Heart right ventricle (tissue), 16 donors: ENCODE measurements at regions of chr20 and their contacts with region 1.

Region 1: GRCh38 chr20:35883778-35884540 is 70.3 kb downstream of the SCAND1 start:
- DNase-seq: peak; percentile 59 to 70
- ATAC-seq: peak; percentile 81 to 91 (median 84)
- H3K4me3 ChIP-seq: no peak overlapping the region
- H3K27ac ChIP-seq: peak overlapping the region in 5 of 10 donors; percentile 1 to 61 (median 10)
- H3K4me1 ChIP-seq: peaks cover 0 to 32% (median 14%) of the 10 kb centered on the region in 9 donors
- H3K27me3 ChIP-seq: no peaks in the 10 kb centered on the region
- CTCF ChIP-seq: peak; percentile 42 to 82 (median 74)

Region 2: DNA sequence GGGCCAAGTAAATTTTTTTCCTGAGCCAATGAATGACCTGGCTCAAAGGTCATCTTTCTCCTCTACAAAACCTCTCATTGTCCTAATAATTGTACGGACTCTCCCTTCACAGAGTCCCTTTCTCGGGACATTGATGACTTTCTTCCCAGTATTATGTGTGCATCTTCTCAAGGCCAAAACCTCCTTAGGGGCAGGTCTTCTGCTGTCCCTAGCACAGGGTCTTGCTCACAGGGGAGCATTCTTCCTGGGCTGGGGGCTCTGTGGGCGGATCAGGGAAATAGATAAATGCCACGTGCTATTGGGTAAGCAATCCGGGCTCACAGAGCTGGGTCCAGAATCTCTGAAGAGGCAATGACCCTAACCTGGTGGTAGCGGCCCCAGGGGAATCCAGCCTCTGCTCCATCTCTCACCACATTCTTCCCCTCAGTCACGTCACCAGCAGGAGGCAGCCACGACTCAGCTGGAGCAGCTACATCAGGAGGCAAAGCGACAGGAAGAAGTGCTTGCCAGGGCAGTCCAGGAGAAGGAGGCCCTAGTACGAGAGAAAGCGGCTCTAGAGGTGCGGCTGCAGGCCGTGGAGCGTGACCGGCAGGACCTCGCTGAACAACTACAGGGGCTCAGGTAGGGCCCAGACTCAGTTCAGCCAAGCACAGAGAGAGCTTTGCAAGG is 405.0 kb before region 1 on chr20:
- intact Hi-C with region 1: loop called in 1 of 10 experiments (anchors 10 kb)
- DNase-seq: peak in 1 of 2 donors; percentile 17
- ATAC-seq: no peak
- H3K4me3 ChIP-seq: no peak overlapping the region
- H3K27ac ChIP-seq: no peak overlapping the region
- H3K4me1 ChIP-seq: no peaks in the 10 kb centered on the region
- H3K27me3 ChIP-seq: no peaks in the 10 kb centered on the region
- CTCF ChIP-seq: no peak

Region 3: DNA sequence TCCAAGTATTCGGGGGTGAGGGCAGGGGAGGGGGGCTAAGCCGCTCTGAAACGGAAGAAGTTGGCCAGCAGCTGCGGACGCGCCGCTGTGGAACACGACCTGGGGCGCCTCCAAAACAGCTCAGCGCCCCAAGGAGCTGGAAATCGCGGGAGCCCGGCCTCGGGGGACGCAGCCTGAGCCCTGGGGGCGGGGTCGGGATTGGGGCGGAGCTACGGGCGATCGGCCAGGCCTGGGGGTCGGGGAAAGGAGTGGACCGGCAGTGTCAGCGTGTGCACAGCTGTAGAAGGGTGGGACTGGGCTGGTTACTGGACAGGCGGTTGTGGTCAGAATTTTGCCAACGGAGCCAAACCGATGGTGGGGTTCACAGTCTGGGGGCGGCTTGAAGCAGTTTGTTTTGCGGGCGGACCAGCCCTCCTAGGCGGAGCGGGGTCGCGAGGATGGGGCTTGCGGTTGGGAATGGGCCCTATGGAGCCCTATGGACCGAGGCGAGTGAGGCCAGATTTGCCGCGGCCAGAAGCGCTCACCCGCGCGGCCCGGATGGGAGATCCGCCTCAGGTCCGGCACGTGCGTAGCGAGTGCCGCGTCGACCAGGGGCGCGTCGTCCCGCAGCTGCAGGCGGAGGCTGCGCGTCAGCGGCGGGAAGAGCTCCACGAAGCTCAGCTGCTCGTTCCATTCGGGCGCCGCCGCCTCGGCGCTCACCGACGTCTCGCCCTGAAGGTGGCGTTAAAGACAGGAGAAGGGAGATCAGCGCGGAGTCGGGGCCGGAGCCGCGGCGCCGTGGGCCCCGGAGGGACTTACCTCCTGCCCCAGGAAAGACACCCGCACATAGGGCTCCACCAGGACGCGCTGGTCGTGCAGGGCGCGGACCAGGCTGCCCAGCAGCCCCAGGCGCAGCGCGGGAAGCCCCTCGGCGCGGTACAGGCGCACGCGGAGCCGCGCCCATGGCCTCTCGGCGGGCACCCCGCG is 282.7 kb before region 1 on chr20:
- intact Hi-C with region 1: loop called in 1 of 10 experiments (anchors 10 kb)
- DNase-seq: peak; percentile 66 to 80
- ATAC-seq: peak; percentile 77 to 90 (median 88)
- H3K4me3 ChIP-seq: peak overlapping the region; percentile 32 to 58 (median 50)
- H3K27ac ChIP-seq: no peak overlapping the region
- H3K4me1 ChIP-seq: peaks cover 0 to 18% (median 17%) of the 10 kb centered on the region in 9 donors
- H3K27me3 ChIP-seq: peaks cover 0 to 35% (median 21%) of the 10 kb centered on the region in 7 donors
- CTCF ChIP-seq: peak in 8 of 9 donors; percentile 36 to 80 (median 56)

Region 4: GRCh38 chr20:35699127-35699975 is 184.6 kb before region 1 on chr20 and contains the starts of genes NFS1 and ROMO1:
- intact Hi-C with region 1: loop called in 2 of 10 experiments (anchors 5 kb)
- DNase-seq: peak; percentile 85 to 88
- ATAC-seq: peak; percentile 93 to 97 (median 94)
- H3K4me3 ChIP-seq: peak within 1 kb of the TSS; percentile 64 to 99 (median 90)
- H3K27ac ChIP-seq: peak within 1 kb of the TSS; percentile 76 to 95 (median 90)
- H3K4me1 ChIP-seq: peaks cover 5 to 40% (median 22%) of the 10 kb centered on the region in 9 donors
- H3K27me3 ChIP-seq: no peaks in the 10 kb centered on the region
- CTCF ChIP-seq: peak in 6 of 9 donors; percentile 12 to 46 (median 38)
- total RNA-seq, gene NFS1: 41.8 to 69.0 (median 59.3) TPM
- total RNA-seq, gene ROMO1: 128 to 193 (median 156) TPM

Region 5: DNA sequence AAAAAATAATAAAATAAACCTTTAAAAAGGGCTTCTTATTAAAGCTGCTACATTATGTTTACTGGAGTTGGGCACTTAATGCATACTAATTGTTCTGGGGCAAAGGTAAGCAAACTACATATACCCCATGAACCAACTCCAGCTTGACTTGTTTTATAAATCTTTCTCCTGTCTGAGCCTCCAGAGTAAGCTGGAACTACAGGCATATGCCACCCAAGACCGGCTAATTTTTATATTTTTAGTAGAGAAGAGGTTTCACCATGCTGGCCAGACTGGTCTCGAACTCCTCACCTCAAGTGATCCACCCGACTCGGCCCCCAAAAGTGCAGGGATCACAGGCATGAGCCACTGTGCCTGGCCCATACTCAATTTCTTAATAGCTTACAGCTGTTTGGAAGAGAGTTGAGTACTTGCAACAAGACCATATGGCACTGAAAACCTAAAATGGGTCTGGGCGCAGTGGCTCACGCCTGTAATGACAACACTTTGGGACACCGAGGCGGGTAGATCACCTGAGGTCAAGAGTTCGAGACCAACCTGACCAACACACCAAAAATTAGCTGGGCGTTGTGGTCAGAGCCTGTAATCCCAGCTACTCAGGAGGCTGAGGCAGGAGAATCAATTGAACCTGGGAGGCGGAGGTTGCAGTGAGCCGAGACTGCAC is 164.9 kb before region 1 on chr20:
- intact Hi-C with region 1: loop called in 2 of 10 experiments (anchors 10 kb)
- DNase-seq: no peak
- ATAC-seq: no peak
- H3K4me3 ChIP-seq: no peak overlapping the region
- H3K27ac ChIP-seq: no peak overlapping the region
- H3K4me1 ChIP-seq: peaks cover 3 to 78% (median 27%) of the 10 kb centered on the region in 9 donors
- H3K27me3 ChIP-seq: no peaks in the 10 kb centered on the region
- CTCF ChIP-seq: no peak

Region 6: DNA sequence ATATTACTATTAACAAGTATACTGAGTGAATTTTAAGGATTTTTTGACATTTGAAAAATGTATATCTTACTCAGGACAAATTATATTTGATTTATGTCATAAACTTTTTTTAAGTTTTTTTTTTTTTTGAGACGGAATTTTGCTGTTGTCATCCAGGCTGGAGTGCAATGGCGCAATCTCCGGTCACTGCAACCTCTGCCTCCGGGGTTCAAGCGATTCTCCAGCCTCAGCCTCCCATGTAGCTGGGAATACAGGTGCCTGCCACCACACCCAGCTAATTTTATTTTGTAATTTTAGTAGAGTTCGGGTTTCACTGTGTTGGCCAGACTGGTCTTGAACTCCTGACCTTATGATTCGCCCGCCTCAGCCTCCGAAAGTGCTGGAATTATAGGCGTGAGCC is 67.6 kb before region 1 on chr20:
- intact Hi-C with region 1: no loop called
- DNase-seq: no peak
- ATAC-seq: no peak
- H3K4me3 ChIP-seq: no peak overlapping the region
- H3K27ac ChIP-seq: no peak overlapping the region
- H3K4me1 ChIP-seq: peaks cover 0 to 27% (median 5%) of the 10 kb centered on the region in 9 donors
- H3K27me3 ChIP-seq: no peaks in the 10 kb centered on the region
- CTCF ChIP-seq: no peak

Region 7: GRCh38 chr20:35828434-35828833 is 55.5 kb before region 1 on chr20:
- intact Hi-C with region 1: loop called in 1 of 10 experiments (anchors 5 kb)
- DNase-seq: peak; percentile 54 to 58
- ATAC-seq: peak; percentile 71 to 97 (median 89)
- H3K4me3 ChIP-seq: no peak overlapping the region
- H3K27ac ChIP-seq: peak overlapping the region in 8 of 10 donors; percentile 13 to 55 (median 46)
- H3K4me1 ChIP-seq: peaks cover 0 to 36% (median 10%) of the 10 kb centered on the region in 9 donors
- H3K27me3 ChIP-seq: no peaks in the 10 kb centered on the region
- CTCF ChIP-seq: no peak

Region 8: DNA sequence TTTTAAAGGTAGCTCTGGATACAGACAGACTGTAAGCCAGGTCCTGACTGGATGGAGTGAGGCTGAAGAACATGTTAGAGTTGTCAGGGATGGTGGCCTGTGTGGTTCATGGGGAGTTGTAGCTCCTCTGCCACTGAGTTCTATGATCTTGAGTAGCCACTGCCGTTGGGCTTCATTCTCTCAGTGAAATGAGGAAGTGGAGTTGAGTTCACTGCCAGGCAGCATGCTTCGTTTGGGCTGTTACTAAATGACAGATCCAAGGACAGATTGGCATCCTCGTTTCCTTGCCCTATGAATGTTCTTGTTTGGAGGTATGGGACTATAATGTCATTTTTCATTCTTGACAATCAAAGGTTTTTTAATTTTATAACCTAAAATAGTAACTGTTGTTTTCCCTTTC is 33.1 kb after region 1 on chr20:
- intact Hi-C with region 1: no loop called
- DNase-seq: no peak
- ATAC-seq: no peak
- H3K4me3 ChIP-seq: no peak overlapping the region
- H3K27ac ChIP-seq: no peak overlapping the region
- H3K4me1 ChIP-seq: no peaks in the 10 kb centered on the region
- H3K27me3 ChIP-seq: no peaks in the 10 kb centered on the region
- CTCF ChIP-seq: no peak

Region 9: GRCh38 chr20:36064658-36065426 is 180.9 kb after region 1 on chr20:
- intact Hi-C with region 1: no loop called
- DNase-seq: peak; percentile 94 to 98
- ATAC-seq: peak; percentile 98 to 99 (median 98)
- H3K4me3 ChIP-seq: peak overlapping the region; percentile 42 to 72 (median 62)
- H3K27ac ChIP-seq: peak overlapping the region; percentile 47 to 86 (median 80)
- H3K4me1 ChIP-seq: peaks cover 4 to 24% (median 13%) of the 10 kb centered on the region in 9 donors
- H3K27me3 ChIP-seq: no peaks in the 10 kb centered on the region
- CTCF ChIP-seq: peak in 2 of 9 donors; percentile 5 to 21